Left cardiac atrium (tissue), 4 donors: ENCODE measurements at regions of chr14 and their contacts with region 1.

Region 1: GRCh38 chr14:30754778-30755177 is 119.6 kb upstream of the COCH start:
- DNase-seq: no peak
- ATAC-seq: no peak

Region 2: GRCh38 chr14:30770376-30770775 is 15.6 kb after region 1 on chr14:
- intact Hi-C with region 1: loop called in 1 of 2 experiments (anchors 2 kb)
- DNase-seq: no peak
- ATAC-seq: no peak

Region 3: DNA sequence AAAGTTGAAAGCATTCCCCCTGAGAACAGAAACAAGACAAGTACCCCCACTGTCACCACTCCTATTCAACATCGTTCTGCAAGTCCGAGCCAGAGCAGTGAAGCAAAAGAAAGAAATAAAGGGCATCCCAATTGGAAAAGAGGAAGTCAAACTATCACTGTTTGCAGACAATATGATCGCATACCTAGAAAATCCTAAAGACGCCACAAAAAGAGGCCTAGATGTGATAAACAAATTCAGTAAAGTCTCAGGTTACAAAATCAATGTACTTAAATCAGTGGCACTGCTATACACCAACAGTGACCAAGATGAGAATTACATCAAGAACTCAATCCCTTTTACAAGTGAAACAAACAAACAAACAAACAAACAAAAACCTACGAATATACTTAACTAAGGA is 31.9 kb after region 1 on chr14:
- intact Hi-C with region 1: no loop called
- DNase-seq: no peak
- ATAC-seq: no peak

Region 4: DNA sequence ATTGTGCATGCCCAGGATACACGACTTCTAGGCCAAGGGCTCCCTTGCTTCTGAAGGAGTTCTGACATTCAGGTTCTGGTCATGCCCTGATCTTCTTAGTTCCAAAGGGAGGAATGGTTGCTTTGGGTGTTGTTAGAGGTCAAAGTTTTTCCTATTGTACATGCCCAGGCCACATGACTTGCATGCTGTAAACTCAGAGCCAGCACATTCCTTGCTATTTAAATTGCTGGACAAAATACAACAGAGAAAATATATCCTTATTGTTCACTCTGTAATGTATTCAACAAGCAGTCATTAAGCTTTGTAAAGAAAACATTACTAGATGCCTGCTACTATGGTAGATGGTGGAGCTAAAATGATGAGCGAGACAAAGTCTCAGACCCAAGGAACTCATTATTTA is 48.4 kb after region 1 on chr14:
- intact Hi-C with region 1: no loop called
- DNase-seq: no peak
- ATAC-seq: no peak